Activated CD4-positive, alpha-beta T cell treated with anti-CD3 and anti-CD28 coated beads, Interleukin-2, amount 10 ng/mL, durations not matched to agents 24 days and 14 days (primary cell): ENCODE measurements at regions of chr7 and their contacts with region 1.

Region 1: GRCh38 chr7:12257582-12257981 is 46.5 kb downstream of the TMEM106B start:
- DNase-seq: peak; percentile 88
- H3K4me3 Mint-ChIP-seq: no peak overlapping the region
- H3K27ac Mint-ChIP-seq: no peak overlapping the region
- H3K4me1 Mint-ChIP-seq: peaks cover 8% of the 10 kb centered on the region
- H3K27me3 Mint-ChIP-seq: peaks cover 7% of the 10 kb centered on the region

Region 2: DNA sequence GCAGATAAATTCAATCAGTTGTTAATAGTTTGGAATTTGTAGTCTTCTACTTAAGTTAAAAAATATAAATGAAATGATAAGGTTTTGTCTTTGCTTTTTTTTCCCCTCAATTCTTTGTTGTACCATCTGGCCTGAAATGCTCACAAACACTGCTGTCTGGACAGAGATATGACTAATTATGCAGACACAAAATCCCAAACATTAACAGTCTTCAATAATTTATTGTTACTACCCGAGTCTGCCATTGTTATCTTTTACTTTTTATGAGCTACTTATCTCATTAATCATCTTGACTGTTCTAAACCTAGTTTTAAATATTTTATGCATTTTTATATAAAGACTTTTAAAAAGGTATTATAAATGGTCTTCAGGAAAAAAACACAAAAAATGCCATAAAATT is 360.9 kb before region 1 on chr7:
- intact Hi-C with region 1: no loop called
- DNase-seq: no peak
- H3K4me3 Mint-ChIP-seq: no peak overlapping the region
- H3K27ac Mint-ChIP-seq: no peak overlapping the region
- H3K4me1 Mint-ChIP-seq: no peaks in the 10 kb centered on the region
- H3K27me3 Mint-ChIP-seq: no peaks in the 10 kb centered on the region

Region 3: DNA sequence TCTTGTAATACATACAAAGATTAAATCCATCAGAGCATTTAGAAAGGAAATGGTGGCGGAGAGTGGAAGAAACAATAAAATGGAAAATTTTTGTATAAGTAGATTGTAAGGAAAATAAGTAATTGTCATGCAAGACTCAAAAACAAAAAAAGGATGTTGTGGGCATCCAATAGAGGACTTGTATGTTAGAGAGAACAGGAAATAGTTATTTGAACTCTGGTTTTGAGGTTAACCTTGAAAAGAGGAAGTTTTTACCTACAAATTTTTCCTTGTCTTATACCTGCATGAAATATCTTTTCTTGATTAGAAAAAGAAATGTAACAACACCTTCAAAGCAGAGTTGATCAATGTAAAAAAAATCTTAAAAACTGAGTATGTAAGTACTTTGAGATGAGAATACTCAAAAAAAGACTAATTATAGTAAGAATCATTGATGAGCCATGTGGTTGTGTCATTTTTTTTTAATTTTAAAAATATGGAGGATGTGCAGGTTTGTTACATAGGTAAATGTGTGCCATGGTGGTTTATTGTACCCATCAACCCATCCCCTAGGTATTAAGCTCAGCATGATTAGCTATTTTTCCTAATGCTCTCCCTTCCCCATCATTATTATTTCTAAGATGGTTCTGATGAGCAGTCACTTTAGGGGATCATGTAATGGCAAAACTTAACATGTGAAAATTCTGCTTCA is 34.5 kb before region 1 on chr7:
- intact Hi-C with region 1: loop called (anchors 1 kb)
- DNase-seq: no peak
- H3K4me3 Mint-ChIP-seq: peak overlapping the region; percentile 55
- H3K27ac Mint-ChIP-seq: peak overlapping the region; percentile 45
- H3K4me1 Mint-ChIP-seq: peaks cover 34% of the 10 kb centered on the region
- H3K27me3 Mint-ChIP-seq: no peaks in the 10 kb centered on the region

Region 4: GRCh38 chr7:12314199-12314598 is 56.6 kb after region 1 on chr7:
- intact Hi-C with region 1: loop called (anchors 2 kb)
- DNase-seq: no peak
- H3K4me3 Mint-ChIP-seq: no peak overlapping the region
- H3K27ac Mint-ChIP-seq: no peak overlapping the region
- H3K4me1 Mint-ChIP-seq: peaks cover 3% of the 10 kb centered on the region
- H3K27me3 Mint-ChIP-seq: peaks cover 2% of the 10 kb centered on the region

Region 5: DNA sequence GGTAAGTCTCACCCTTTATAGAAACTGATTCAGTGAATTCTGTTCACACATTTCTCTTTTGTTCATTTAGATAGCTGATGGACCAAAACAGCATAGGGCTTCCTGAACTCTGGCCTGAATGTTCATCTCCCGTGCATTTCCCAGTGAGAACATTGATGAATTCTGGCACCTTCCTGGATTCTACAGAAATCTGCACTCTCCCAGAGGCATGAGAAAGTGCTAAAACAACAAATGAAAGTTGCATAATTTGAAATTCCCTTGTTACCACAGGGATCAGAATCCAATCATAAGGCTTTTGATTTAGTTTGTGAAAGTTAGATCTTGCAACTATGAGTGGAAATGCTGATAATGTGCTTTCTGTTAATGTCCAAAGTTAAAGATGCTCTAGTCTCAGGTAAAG is 283.3 kb after region 1 on chr7:
- intact Hi-C with region 1: no loop called
- DNase-seq: no peak
- H3K4me3 Mint-ChIP-seq: no peak overlapping the region
- H3K27ac Mint-ChIP-seq: no peak overlapping the region
- H3K4me1 Mint-ChIP-seq: no peaks in the 10 kb centered on the region
- H3K27me3 Mint-ChIP-seq: no peaks in the 10 kb centered on the region